ENCODE measurements at regions of chr11 and their contacts with region 1.

Region 1: DNA sequence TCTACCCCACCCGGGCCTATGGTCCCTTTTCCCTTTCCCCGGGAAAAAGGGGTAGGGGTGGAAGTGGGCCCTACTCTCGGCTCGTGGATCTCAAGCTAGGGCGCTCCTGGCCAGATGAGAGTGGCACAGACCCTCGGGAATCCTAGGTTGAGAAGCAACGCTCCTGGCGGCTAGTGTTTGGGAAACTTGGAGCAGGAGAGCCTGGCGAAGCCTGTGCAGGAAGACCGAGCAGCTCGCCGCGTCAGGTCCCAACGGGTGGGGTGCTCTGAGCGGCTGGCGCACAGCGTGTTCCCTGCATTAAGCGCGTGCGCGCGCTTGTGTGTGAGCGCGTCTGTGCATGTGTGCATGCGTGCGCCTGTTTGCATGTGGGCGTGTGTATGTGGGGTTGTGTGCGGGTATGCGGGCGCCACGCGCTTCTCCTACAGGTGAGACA is 7.1 kb upstream of the FLI1 start:
- DNase-seq: peak in 13 of 14 experiments; percentile 34 to 78 (median 56)
- ATAC-seq: peak; percentile 89
- H3K4me3 ChIP-seq: peak overlapping the region; percentile 55
- H3K4me3 Mint-ChIP-seq: peak overlapping the region; percentile 90
- H3K27ac ChIP-seq: no peak overlapping the region
- H3K27ac Mint-ChIP-seq: no peak overlapping the region
- H3K4me1 ChIP-seq: peaks cover 41% of the 10 kb centered on the region
- H3K4me1 Mint-ChIP-seq: peaks cover 62% of the 10 kb centered on the region
- H3K27me3 ChIP-seq: peaks cover 25 to 40% of the 10 kb centered on the region in 2 experiments
- H3K27me3 Mint-ChIP-seq: peaks cover 53% of the 10 kb centered on the region
- CTCF ChIP-seq: no peak

Region 2: GRCh38 chr11:128725630-128726319 is 39.0 kb after region 1 on chr11:
- CTCF ChIA-PET with region 1: interaction called, 3 read pairs
- POLR2A ChIA-PET with region 1: interaction called, 34 read pairs
- intact Hi-C with region 1: no loop called
- DNase-seq: peak in 12 of 14 experiments; percentile 27 to 92 (median 50)
- ATAC-seq: peak; percentile 61
- H3K4me3 ChIP-seq: peak overlapping the region; percentile 33
- H3K4me3 Mint-ChIP-seq: peak overlapping the region; percentile 80
- H3K27ac ChIP-seq: peak overlapping the region; percentile 4 to 63
- H3K27ac Mint-ChIP-seq: peak overlapping the region; percentile 90
- H3K4me1 ChIP-seq: peaks cover 100% of the 10 kb centered on the region
- H3K4me1 Mint-ChIP-seq: peaks cover 99% of the 10 kb centered on the region
- H3K27me3 ChIP-seq: no peaks in the 10 kb centered on the region
- H3K27me3 Mint-ChIP-seq: peaks cover 5% of the 10 kb centered on the region
- CTCF ChIP-seq: no peak

Region 3: DNA sequence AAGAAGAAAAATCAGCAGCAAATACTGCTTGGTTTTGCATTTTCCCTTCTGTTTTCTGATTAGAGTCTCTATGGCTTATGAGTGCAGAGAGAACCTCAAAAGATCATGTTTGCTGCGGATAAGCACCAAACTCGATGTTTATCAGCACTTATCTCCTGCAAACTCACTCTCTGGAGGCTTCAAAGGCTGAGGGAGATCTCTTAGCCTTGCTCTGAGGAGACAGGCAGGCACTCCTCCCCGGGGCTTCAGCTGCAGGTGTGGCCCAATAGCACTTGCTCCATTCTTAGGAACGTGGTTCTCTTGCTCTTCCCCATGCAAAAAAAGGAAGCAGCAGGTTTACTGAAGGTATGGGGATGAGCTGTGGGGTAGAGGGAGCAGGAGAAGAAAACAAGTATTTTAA is 52.2 kb after region 1 on chr11:
- CTCF ChIA-PET with region 1: interaction called, 7 read pairs
- POLR2A ChIA-PET with region 1: interaction called, 10 read pairs
- intact Hi-C with region 1: no loop called
- DNase-seq: peak in 8 of 14 experiments; percentile 11 to 64 (median 40)
- ATAC-seq: peak; percentile 62
- H3K4me3 ChIP-seq: peak overlapping the region; percentile 24
- H3K4me3 Mint-ChIP-seq: peak overlapping the region; percentile 81
- H3K27ac ChIP-seq: peak overlapping the region in 1 of 2 donors; percentile 46
- H3K27ac Mint-ChIP-seq: peak overlapping the region; percentile 92
- H3K4me1 ChIP-seq: peaks cover 93% of the 10 kb centered on the region
- H3K4me1 Mint-ChIP-seq: peaks cover 92% of the 10 kb centered on the region
- H3K27me3 ChIP-seq: no peaks in the 10 kb centered on the region
- H3K27me3 Mint-ChIP-seq: no peaks in the 10 kb centered on the region
- CTCF ChIP-seq: no peak

Region 4: GRCh38 chr11:128745311-128746136 is 58.8 kb after region 1 on chr11:
- CTCF ChIA-PET with region 1: no interaction called
- POLR2A ChIA-PET with region 1: interaction called, 3 read pairs
- intact Hi-C with region 1: loop called in 1 of 2 experiments (anchors 2 kb)
- DNase-seq: peak in 1 of 14 experiments; percentile 33
- ATAC-seq: no peak
- H3K4me3 ChIP-seq: no peak overlapping the region
- H3K4me3 Mint-ChIP-seq: no peak overlapping the region
- H3K27ac ChIP-seq: no peak overlapping the region
- H3K27ac Mint-ChIP-seq: peak overlapping the region; percentile 70
- H3K4me1 ChIP-seq: peaks cover 71% of the 10 kb centered on the region
- H3K4me1 Mint-ChIP-seq: peaks cover 92% of the 10 kb centered on the region
- H3K27me3 ChIP-seq: no peaks in the 10 kb centered on the region
- H3K27me3 Mint-ChIP-seq: no peaks in the 10 kb centered on the region
- CTCF ChIP-seq: no peak

Measured in CD4-positive, alpha-beta T cell (primary cell).